Left cardiac atrium (tissue), 4 donors: ENCODE measurements at regions of chr20 and their contacts with region 1.

Region 1: DNA sequence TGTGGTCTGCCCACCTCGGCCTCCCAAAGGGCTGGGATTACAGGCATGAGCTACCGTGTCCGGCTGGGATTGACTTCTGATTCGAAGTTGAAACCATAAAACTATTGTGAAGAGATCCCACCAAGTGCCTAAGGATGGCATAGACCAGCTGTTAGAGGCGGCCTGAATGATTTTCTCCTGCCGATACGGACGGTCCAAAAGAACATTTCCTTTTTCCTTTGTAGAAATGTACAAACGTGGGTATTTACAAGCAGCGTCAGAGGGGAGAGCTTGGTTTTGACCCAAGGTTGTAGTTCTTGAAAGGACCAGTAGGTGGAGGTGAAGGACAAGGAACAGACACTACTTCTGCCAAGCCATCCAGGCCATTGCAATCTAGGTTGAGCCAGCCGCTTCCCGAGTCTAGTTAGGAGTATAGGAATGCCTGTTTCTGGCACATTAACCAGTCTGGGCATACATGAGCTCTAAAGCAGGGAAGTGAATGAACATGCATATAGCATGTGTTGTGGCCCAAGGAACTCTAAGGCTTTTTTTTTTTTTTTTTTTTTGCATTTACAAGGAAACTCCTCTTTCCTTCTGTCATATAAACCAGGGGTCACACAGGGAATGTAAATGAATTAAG is 29.1 kb downstream of the MOCS3 start:
- DNase-seq: peak; percentile 66
- ATAC-seq: peak; percentile 90 to 94

Region 2: GRCh38 chr20:51306503-51307358 is 319.0 kb after region 1 on chr20:
- intact Hi-C with region 1: loop called (anchors 2 to 5 kb)
- DNase-seq: peak; percentile 77
- ATAC-seq: peak; percentile 92 to 97

Region 3: DNA sequence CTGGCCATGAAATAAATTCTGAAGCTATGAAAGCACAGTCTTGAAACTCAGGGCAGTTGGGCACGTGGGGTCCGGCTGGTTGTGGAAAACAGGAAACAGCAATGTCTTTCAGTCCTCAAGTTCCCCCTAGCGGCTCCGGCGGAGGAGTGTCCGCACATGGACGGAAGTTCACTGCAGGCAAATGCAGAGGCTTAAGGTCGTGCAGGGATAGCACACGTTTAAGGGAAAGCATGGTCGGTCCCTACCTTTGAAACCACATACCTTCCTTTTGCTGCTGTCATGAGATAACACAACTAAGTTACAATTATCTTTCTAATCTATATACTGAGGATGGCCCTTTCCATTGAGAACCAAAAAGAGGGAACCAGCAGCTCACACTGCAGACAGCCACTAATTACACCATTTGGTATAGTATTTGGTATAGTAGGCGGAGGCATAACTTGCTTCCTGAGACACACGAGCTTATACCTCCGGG is 607.4 kb after region 1 on chr20:
- intact Hi-C with region 1: loop called in 1 of 2 experiments (anchors 10 kb)
- DNase-seq: peak; percentile 90
- ATAC-seq: peak; percentile 98

Region 4: GRCh38 chr20:51624157-51624731 is 636.5 kb after region 1 on chr20:
- intact Hi-C with region 1: loop called in 1 of 2 experiments (anchors 10 kb)
- DNase-seq: peak; percentile 75
- ATAC-seq: peak; percentile 48 to 62

Region 5: DNA sequence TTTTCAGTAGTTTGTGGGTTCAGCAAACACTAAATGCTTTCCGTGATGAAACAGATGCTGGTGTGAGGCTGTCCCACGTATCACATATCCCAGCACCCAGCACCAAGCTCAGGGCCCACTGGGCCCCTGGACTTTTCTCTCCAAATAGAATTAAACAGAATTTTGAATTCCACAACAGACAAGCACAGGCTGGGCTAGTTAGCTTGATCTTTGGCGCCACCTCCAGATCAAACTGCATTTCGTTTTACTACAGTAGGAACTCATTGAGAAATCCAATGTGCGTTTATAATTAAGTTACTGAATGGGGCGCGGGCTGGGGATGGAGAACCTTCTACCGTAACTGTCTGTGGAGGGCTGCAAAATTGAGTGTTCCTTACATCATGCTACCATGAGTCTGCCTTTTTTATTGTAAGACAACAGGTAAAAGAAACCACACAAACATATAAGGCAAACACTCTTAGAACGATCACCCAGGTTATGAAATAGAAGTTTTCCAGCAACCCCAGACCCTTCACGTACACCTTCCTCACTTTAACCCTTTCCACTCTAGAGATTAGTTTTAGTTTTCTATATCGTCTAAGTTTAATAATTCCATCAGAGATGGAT is 1096.0 kb after region 1 on chr20:
- intact Hi-C with region 1: loop called in 1 of 2 experiments (anchors 10 kb)
- DNase-seq: peak; percentile 41
- ATAC-seq: peak; percentile 56 to 68